ENCODE measurements at regions of chr1 and their contacts with region 1.

Region 1: DNA sequence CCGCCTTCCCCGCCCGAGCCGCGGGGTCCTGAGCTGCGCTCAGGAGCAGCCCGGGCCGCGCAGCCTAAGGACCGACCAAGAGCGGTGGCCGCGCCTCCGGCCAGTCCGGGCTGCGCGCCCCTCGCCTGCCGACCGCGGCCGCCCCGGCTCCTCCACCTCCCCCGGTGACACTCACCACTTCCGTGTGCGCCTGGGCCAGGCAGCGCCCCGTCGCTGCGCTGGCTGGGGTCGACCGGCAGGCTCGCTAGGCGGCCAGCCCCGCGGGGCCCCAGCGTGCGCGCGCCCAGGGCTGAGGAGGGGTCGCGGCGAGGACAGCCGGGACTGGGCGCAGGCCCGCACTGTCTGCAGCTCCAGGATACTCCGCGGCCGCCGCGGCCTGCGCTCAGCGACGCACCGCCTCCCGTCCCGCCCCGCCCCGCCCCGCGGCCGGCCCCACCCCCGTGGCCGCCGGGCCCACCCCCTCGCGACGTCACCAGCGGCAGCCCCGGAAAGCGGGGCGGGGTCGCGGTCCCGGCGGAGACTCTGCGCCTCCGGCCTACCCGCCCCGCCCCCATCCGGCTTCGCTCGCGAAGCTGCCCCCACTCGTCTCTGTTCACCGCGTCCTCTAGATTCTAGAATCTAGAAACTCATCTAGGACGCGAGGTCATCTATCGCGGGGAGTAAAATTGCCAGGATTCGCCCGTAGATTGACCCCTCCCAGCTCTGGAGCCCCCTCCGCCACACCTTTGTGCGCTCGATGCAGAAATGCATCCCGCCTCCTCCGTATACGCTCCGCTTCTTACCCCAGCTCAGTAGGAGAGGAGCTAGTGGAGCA is at the start of gene JAK1:
- DNase-seq: peak; percentile 87 to 91 (median 90)
- H3K4me3 ChIP-seq: peak within 1 kb of the TSS; percentile 93 to 95
- H3K4me3 Mint-ChIP-seq: peak within 1 kb of the TSS; percentile 89 to 97 (median 94)
- H3K27ac ChIP-seq: peak within 1 kb of the TSS; percentile 96
- H3K27ac Mint-ChIP-seq: peak within 1 kb of the TSS; percentile 93 to 97 (median 97)
- H3K4me1 ChIP-seq: peaks cover 47% of the 10 kb centered on the region
- H3K4me1 Mint-ChIP-seq: peaks cover 38 to 42% (median 40%) of the 10 kb centered on the region in 4 donors
- H3K27me3 ChIP-seq: no peaks in the 10 kb centered on the region
- H3K27me3 Mint-ChIP-seq: no peaks in the 10 kb centered on the region
- total RNA-seq, gene JAK1: 370 to 372 TPM

Region 2: GRCh38 chr1:64823691-64824476 is 142.5 kb before region 1 on chr1:
- CTCF ChIA-PET with region 1: interaction called, 3 read pairs
- POLR2A ChIA-PET with region 1: interaction called, 12 read pairs
- intact Hi-C with region 1: loop called (anchors 2 kb)
- DNase-seq: peak; percentile 59 to 68 (median 63)
- H3K4me3 ChIP-seq: no peak overlapping the region
- H3K4me3 Mint-ChIP-seq: peak overlapping the region in 5 of 8 donors; percentile 44 to 66 (median 54)
- H3K27ac ChIP-seq: no peak overlapping the region
- H3K27ac Mint-ChIP-seq: peak overlapping the region in 5 of 7 donors; percentile 13 to 82 (median 52)
- H3K4me1 ChIP-seq: peaks cover 22% of the 10 kb centered on the region
- H3K4me1 Mint-ChIP-seq: peaks cover 21 to 35% (median 30%) of the 10 kb centered on the region in 4 donors
- H3K27me3 ChIP-seq: no peaks in the 10 kb centered on the region
- H3K27me3 Mint-ChIP-seq: no peaks in the 10 kb centered on the region

Region 3: DNA sequence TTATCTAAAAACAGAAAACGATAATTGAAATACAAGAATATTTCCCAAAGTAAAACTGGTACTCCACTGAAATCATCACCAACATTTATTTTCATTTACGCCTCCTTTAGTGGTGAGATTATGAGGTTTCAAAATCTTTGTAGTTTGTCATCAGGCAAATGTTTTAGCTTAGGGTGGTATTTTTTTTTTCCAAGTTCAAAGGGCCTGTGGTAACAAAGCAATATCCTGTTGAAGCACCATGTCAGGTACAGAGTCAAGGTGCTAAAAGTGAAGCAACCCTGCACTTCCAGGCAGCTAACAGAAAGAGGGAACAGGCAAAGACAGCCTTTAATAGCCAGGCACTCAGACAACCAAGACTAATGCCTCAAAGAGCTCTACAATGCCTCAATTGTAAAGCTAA is 89.2 kb before region 1 on chr1:
- CTCF ChIA-PET with region 1: interaction called, 16 read pairs
- POLR2A ChIA-PET with region 1: interaction called, 62 read pairs
- intact Hi-C with region 1: loop called (anchors 1 kb)
- DNase-seq: peak; percentile 76 to 90 (median 87)
- H3K4me3 ChIP-seq: no peak overlapping the region
- H3K4me3 Mint-ChIP-seq: peak overlapping the region; percentile 65 to 87 (median 82)
- H3K27ac ChIP-seq: peak overlapping the region; percentile 31
- H3K27ac Mint-ChIP-seq: peak overlapping the region; percentile 86 to 96 (median 94)
- H3K4me1 ChIP-seq: peaks cover 59% of the 10 kb centered on the region
- H3K4me1 Mint-ChIP-seq: peaks cover 60 to 89% (median 74%) of the 10 kb centered on the region in 4 donors
- H3K27me3 ChIP-seq: no peaks in the 10 kb centered on the region
- H3K27me3 Mint-ChIP-seq: no peaks in the 10 kb centered on the region

Region 4: GRCh38 chr1:64948905-64949833 is 17.2 kb before region 1 on chr1:
- CTCF ChIA-PET with region 1: interaction called, 4 read pairs
- POLR2A ChIA-PET with region 1: interaction called, 22 read pairs
- intact Hi-C with region 1: loop called (anchors 2 kb)
- DNase-seq: peak in 2 of 5 donors; percentile 24 to 74
- H3K4me3 ChIP-seq: no peak overlapping the region
- H3K4me3 Mint-ChIP-seq: peak overlapping the region in 6 of 8 donors; percentile 22 to 78 (median 58)
- H3K27ac ChIP-seq: no peak overlapping the region
- H3K27ac Mint-ChIP-seq: peak overlapping the region in 6 of 7 donors; percentile 6 to 82 (median 56)
- H3K4me1 ChIP-seq: peaks cover 89% of the 10 kb centered on the region
- H3K4me1 Mint-ChIP-seq: peaks cover 68 to 88% (median 79%) of the 10 kb centered on the region in 4 donors
- H3K27me3 ChIP-seq: no peaks in the 10 kb centered on the region
- H3K27me3 Mint-ChIP-seq: no peaks in the 10 kb centered on the region

Region 5: DNA sequence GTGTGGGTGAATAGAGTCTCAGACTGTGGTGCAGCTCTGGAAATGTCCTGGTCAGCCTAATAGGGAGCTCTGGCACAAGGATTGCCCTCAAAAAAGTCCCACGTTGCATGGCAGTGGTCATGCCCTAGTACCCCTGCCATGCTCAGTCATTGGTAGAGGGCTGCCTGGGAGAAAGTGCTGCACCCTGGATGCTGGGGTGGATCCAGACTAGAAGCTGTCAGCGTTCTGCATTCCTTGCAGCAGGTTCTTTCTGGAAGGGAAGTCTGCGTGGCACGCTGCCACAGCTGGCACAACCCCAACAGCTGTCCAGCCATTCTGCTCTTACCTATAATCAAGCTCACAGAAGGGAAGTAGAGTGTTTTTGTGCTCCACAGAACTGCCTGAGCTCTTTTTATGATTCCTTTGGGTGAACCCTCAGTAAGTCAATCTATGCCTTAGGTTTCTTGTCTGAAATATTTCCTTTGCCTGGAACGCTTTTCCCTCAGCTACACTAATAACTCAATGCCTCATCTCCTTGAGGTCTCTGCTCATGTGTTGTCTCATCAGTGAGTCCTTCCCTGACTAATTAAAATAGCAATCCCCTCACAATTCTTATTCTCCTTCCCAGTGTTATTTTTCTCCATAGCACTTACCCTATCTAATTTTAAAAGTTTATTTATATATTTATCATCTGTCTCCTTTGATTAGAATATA is 61.4 kb after region 1 on chr1:
- CTCF ChIA-PET with region 1: no interaction called
- POLR2A ChIA-PET with region 1: no interaction called
- intact Hi-C with region 1: no loop called
- DNase-seq: no peak
- H3K4me3 ChIP-seq: no peak overlapping the region
- H3K4me3 Mint-ChIP-seq: no peak overlapping the region
- H3K27ac ChIP-seq: no peak overlapping the region
- H3K27ac Mint-ChIP-seq: peak overlapping the region in 1 of 7 donors; percentile 12
- H3K4me1 ChIP-seq: peaks cover 4% of the 10 kb centered on the region
- H3K4me1 Mint-ChIP-seq: peaks cover 6 to 22% (median 14%) of the 10 kb centered on the region in 4 donors
- H3K27me3 ChIP-seq: no peaks in the 10 kb centered on the region
- H3K27me3 Mint-ChIP-seq: no peaks in the 10 kb centered on the region

Region 6: DNA sequence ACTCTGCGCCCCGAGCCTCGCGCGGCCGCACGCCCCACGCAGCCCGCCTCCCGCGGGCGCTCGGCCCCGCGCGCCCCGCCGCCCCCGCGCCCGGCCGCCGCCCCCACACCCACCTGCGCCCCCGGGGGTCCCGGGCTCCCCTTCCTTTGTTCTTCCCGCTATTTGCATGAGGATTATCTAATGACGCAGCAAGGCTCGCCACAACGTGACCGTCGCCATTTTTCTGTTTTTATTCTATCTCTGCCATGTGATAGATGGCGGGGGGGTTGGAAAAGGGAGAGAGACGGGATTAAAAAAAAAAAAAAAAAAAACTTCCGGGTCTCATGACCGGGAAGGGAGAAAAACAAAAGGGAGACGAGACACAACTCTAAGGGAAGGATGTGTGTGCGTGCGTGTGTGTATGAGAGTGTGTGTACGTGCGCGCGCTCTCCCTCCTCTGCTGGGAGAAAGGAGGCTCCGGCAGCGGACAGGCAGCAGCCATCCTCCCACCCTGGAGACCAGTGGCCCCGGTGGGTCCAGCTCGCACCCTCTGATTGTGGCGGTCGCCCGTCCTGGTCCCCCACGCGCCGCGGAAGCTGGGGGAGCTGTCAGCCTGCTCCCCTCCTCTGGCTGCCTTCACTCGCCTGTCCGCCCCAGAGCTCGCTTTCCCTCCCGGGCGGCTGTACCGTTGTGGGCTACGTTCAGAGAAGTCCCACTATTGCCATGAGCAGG is 101.3 kb after region 1 on chr1:
- CTCF ChIA-PET with region 1: interaction called, 4 read pairs
- POLR2A ChIA-PET with region 1: interaction called, 48 read pairs
- intact Hi-C with region 1: loop called (anchors 1 kb)
- DNase-seq: peak; percentile 66 to 72 (median 69)
- H3K4me3 ChIP-seq: peak overlapping the region; percentile 84 to 97
- H3K4me3 Mint-ChIP-seq: peak overlapping the region; percentile 92 to 98 (median 96)
- H3K27ac ChIP-seq: peak overlapping the region; percentile 87
- H3K27ac Mint-ChIP-seq: peak overlapping the region; percentile 95 to 99 (median 98)
- H3K4me1 ChIP-seq: peaks cover 50% of the 10 kb centered on the region
- H3K4me1 Mint-ChIP-seq: peaks cover 39 to 66% (median 49%) of the 10 kb centered on the region in 4 donors
- H3K27me3 ChIP-seq: no peaks in the 10 kb centered on the region
- H3K27me3 Mint-ChIP-seq: no peaks in the 10 kb centered on the region

Region 7: GRCh38 chr1:65419681-65420589 is 453.6 kb after region 1 on chr1:
- CTCF ChIA-PET with region 1: no interaction called
- POLR2A ChIA-PET with region 1: no interaction called
- intact Hi-C with region 1: loop called (anchors 2 kb)
- DNase-seq: peak; percentile 97 to 99 (median 98)
- H3K4me3 ChIP-seq: peak overlapping the region; percentile 76 to 79
- H3K4me3 Mint-ChIP-seq: peak overlapping the region in 1 of 8 donors; percentile 94
- H3K27ac ChIP-seq: peak overlapping the region; percentile 82
- H3K27ac Mint-ChIP-seq: peak overlapping the region in 5 of 7 donors; percentile 91 to 96 (median 96)
- H3K4me1 ChIP-seq: peaks cover 38% of the 10 kb centered on the region
- H3K4me1 Mint-ChIP-seq: peaks cover 10 to 27% (median 17%) of the 10 kb centered on the region in 4 donors
- H3K27me3 ChIP-seq: no peaks in the 10 kb centered on the region
- H3K27me3 Mint-ChIP-seq: peaks cover 0 to 2% of the 10 kb centered on the region in 2 donors